ENCODE measurements at regions of chr5 and their contacts with region 1.

Region 1: DNA sequence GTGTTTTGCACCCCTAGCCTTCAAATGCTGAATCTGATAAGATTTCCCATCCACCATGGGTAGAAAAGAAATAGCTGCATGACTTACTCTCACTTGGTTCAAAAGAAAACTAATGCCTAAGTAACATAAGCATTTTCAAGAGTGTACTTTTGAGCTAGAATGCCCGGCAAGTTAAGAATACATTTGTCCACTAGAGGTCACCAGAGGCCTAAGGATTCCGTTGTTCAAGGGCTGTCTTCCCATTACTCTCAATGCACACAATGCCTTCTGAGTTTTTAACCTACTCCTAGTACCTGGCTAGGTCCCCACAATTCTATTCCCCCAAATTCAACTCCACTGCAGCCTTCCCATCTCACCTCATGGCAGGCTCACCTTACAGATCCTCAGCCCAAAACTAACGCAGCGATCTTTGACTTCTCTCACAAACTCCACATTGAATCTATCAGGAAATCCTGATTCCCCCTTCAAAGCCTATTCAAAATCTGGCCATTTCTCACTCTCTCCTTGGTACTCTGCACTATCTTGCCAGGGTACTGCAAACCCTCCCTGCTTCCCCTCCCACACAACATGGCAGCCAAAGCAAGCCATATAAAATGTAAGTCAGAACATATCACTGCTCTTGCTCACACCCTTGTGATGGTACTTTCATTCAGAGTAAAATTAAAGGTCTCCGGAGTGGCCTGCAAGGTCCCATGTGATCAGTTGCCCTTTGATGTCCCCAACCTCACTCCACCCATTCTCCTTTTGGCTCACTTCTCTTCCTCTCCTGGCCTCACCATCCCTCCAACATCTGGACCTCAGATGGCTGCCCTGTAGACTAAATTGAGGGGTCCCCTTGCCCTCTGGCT is 13.4 kb downstream of the OXCT1 start:
- DNase-seq: peak; percentile 56
- H3K4me3 ChIP-seq: no peak overlapping the region
- H3K27ac ChIP-seq: no peak overlapping the region
- H3K4me1 ChIP-seq: no peaks in the 10 kb centered on the region
- H3K27me3 ChIP-seq: no peaks in the 10 kb centered on the region
- CTCF ChIP-seq: peak; percentile 72

Region 2: DNA sequence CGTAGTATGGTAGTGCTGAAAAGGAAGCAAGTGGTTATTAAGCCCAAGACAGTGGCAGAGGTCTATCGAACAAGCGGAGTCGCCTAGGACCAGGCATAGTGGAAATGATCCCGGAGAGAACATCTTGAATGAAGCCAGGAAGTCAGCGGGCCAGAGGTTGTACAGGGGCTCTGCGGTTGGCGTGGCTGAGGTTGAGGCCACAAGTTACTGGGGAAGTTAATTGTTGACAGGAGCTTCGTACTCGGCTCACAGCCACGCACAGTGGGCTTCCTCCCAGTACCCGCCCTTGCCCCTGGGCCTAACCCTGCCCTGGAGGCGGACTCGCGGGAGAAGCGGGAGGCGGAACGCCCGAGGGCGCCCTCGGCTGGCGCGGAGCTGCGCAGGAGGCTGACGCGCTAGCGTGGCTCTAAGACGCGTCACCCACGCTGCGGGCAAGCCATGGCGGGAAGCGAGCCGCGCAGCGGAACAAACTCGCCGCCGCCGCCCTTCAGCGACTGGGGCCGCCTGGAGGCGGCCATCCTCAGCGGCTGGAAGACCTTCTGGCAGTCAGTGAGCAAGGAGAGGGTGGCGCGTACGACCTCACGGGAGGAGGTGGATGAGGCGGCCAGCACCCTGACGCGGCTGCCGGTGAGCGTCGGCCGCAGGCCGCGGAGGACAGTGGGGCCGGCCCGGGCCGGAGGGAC is 68.1 kb after region 1 on chr5 and contains the start of gene FBXO4:
- intact Hi-C with region 1: loop called (anchors 5 kb)
- DNase-seq: peak; percentile 86
- H3K4me3 ChIP-seq: peak within 1 kb of the TSS; percentile 66
- H3K27ac ChIP-seq: peak within 1 kb of the TSS; percentile 88
- H3K4me1 ChIP-seq: no peaks in the 10 kb centered on the region
- H3K27me3 ChIP-seq: no peaks in the 10 kb centered on the region
- CTCF ChIP-seq: peak; percentile 32
- total RNA-seq, gene FBXO4: 7.6 to 8.6 TPM

Region 3: GRCh38 chr5:42001673-42002072 is 144.8 kb after region 1 on chr5:
- intact Hi-C with region 1: no loop called
- DNase-seq: no peak
- H3K4me3 ChIP-seq: no peak overlapping the region
- H3K27ac ChIP-seq: no peak overlapping the region
- H3K4me1 ChIP-seq: no peaks in the 10 kb centered on the region
- H3K27me3 ChIP-seq: no peaks in the 10 kb centered on the region
- CTCF ChIP-seq: no peak

Region 4: GRCh38 chr5:42057254-42057690 is 200.4 kb after region 1 on chr5:
- intact Hi-C with region 1: loop called (anchors 2 kb)
- DNase-seq: peak; percentile 24
- H3K4me3 ChIP-seq: no peak overlapping the region
- H3K27ac ChIP-seq: no peak overlapping the region
- H3K4me1 ChIP-seq: no peaks in the 10 kb centered on the region
- H3K27me3 ChIP-seq: no peaks in the 10 kb centered on the region
- CTCF ChIP-seq: peak; percentile 73